Motor neuron (in vitro differentiated cells): ENCODE measurements at regions of chr17 and their contacts with region 1.

Region 1: DNA sequence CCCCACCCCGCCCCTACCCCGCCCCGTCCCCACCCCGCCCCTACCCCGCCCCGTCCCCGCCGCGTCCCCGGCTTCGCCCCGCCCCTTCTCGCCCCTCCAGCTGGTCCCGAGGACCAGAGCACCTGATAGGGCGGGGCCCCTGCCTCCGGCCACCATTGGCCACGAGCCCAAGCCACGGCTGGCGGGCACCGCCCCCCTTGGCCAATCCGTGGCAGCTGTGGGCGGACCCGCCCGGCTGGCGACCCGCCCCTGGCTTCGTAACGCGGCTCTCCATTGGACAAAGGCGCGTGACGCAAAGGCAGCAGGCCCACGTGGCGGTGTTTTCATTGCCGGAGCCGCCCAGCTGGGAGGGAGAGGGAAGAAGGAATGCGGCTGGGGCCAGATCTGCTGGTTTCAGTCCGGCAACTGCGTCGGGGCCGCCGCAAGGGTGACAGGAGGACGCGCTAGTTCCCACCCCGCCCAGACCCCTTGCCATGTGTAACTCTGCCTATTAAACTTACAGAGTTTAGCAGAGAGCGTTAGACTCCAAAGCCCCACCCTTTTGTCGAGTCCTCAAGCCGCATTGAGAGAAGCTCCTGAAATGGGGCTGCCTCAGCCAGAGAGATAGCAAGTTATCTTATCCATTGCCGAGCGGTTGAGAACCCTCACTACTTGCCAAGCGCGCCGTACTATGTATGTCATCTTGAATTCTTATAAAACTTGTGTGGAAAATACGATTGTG is 403 bp upstream of the WIPI1 start:
- ATAC-seq: peak; percentile 84 to 93 (median 90)
- H3K4me3 ChIP-seq: peak overlapping the region; percentile 57 to 92 (median 79)
- H3K27ac ChIP-seq: no peak overlapping the region
- H3K4me1 ChIP-seq: peaks cover 21 to 39% of the 10 kb centered on the region in 2 donors

Region 2: DNA sequence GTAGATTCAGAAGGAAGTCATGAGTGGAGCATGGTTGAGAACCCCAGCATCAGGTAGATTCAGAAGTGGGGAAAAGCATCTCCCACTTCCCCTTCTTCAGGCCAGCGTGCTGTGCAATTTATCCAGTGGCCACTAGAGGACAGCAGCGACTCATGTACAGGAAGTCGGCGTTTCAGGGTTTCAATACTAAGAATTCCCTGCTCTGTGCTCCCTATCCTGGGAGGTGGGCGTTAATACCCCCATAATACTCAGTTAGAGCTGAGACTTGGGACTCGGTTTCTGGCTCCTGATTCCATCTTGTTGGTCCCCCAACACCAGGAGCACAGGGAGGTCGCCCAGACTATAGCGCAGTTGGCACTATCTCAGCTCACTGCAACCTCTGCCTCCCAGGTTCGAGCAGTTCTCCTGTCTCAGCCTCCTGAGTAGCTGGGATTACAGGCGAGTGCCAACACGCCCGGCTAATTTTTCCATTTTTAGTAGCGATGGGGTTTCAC is 285.2 kb before region 1 on chr17:
- in situ Hi-C with region 1: loop called in 1 of 9 experiments (anchors 25 kb)
- ATAC-seq: peak; percentile 54 to 88 (median 74)
- H3K4me3 ChIP-seq: no peak overlapping the region
- H3K27ac ChIP-seq: no peak overlapping the region
- H3K4me1 ChIP-seq: no peaks in the 10 kb centered on the region

Region 3: DNA sequence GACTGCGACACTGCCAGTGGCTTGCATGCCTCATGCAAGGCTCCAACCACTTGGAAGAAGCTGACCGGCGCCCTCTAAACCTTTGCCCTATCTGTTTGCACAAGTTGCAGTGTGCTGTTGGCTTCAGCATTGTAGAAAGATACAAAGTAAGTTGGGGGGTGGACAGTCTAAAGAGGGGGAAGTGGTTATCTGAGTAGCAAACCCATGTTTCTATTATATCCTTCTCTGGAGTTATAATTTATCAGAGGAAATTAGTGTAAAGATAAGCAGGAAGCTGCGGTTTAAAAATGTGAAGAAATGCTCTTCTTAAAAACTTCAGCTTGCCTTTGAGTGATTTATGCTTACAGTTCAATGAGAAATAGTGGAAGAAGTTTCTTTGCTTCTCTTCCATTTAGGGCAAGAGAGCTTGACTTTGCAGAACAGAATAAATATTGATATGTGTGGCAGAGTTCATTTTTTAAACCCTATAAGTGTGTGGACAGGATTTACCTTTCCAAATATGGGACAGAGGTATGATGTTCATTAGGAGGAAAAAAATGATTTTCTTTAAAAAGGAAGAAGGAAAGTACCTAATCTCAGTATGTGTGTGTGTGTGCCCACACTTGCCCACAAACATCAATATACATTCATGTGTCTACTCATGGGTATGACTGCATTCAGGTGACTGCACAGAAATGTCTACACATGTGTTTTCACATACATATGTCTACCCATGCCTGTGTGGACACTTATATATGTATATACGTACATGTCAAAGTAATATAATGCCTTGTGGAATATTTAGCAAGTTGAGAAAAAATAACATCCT is 201.8 kb before region 1 on chr17:
- in situ Hi-C with region 1: loop called in 2 of 9 experiments (anchors 25 kb)
- ATAC-seq: no peak
- H3K4me3 ChIP-seq: no peak overlapping the region
- H3K27ac ChIP-seq: no peak overlapping the region
- H3K4me1 ChIP-seq: peaks cover 7 to 17% of the 10 kb centered on the region in 2 donors

Region 4: GRCh38 chr17:68318103-68318991 is 139.4 kb before region 1 on chr17:
- in situ Hi-C with region 1: no loop called
- ATAC-seq: peak; percentile 7 to 94 (median 90)
- H3K4me3 ChIP-seq: no peak overlapping the region
- H3K27ac ChIP-seq: peak overlapping the region; percentile 8 to 18
- H3K4me1 ChIP-seq: peaks cover 42 to 56% of the 10 kb centered on the region in 2 donors

Region 5: DNA sequence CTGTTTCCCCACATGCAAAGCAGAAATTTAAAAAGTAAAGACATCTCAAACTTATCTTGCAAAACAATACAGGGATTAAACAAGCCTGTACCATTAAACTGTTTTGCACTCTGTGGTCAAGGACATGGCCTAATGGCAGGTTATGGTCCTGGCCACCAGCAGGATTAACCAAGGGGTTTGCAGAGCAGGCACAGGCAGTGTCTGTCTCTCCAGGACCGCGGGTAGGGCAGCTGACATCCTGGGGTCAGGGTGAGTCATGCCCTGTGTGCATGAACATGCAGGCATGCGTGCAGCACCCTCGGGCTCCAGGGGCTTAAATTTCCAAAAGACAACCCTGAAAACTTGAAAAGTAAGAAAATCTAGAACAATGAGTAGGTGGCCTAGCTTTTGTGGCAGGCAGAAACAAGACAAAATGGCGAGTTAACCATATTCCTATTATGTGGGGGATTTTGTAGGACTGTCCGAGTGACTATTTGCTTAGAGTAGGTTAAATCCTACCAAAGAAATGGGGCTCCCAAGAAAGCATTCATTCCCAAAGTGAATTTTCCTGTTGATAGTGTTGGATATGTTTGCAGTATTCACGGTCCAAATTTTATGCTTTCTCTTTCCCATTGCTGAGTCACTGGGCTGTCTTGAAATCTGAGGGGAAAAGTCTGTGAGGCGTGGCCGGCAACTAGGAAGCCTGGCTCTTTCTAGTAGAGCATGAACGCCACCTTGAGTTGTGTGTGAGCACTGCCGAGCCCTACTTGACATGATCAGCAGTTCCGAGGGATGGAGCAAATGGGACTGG is 301.8 kb after region 1 on chr17:
- in situ Hi-C with region 1: loop called in 1 of 9 experiments (anchors 25 kb)
- ATAC-seq: peak; percentile 93 to 99 (median 96)
- H3K4me3 ChIP-seq: peak overlapping the region in 3 of 5 donors; percentile 9 to 22 (median 18)
- H3K27ac ChIP-seq: peak overlapping the region; percentile 14 to 50
- H3K4me1 ChIP-seq: peaks cover 6 to 8% of the 10 kb centered on the region in 2 donors